HEK293 (cell line): ENCODE measurements at regions of chr3 and their contacts with region 1.

Region 1: DNA sequence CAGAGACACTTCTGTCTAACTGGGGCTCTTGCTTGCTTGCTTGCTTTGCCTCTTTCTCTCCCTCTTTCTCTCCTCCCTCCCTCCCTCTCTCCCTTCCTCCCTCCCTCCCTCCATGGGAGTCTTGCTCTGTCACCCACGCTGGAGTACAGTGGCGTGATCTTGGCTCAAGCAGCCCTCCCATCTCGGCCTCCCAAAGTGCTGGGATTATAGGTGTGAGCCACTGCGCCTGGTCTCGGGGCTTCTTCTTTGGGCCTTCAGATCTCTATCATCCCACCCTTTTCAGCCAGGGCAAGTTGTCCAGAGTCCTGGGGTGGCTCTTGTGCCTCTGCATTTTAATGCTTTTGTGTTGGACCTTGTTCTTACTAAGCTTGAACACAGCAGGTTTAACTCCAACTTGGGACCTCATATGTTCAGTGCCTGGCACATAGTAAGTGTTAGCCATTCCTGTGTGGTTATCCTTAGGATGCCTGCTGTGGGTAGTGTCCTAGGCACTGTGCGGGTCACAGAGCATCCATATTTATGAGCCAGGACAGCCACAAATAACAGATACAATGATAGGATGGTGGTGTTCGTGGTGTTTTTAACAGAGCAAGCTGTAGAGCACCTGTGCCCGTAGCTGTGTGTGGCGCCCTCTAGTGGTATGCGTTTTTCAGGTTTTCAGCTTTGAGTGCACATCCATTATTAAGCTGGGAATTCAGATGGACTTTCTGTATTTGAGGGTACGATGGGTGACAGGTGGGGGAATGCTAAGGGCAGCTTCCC is 75.1 kb downstream of the CCK start:
- H3K4me3 ChIP-seq: no peak overlapping the region
- H3K27ac ChIP-seq: no peak overlapping the region
- H3K4me1 ChIP-seq: no peaks in the 10 kb centered on the region
- CTCF ChIP-seq: peak; percentile 74

Region 2: GRCh38 chr3:41893977-41894376 is 296.9 kb before region 1 on chr3:
- CTCF ChIA-PET with region 1: interaction called, 20 read pairs
- POLR2A ChIA-PET with region 1: no interaction called
- H3K4me3 ChIP-seq: no peak overlapping the region
- H3K27ac ChIP-seq: no peak overlapping the region
- H3K4me1 ChIP-seq: no peaks in the 10 kb centered on the region
- CTCF ChIP-seq: no peak

Region 3: GRCh38 chr3:42052484-42053351 is 138.2 kb before region 1 on chr3:
- CTCF ChIA-PET with region 1: no interaction called
- POLR2A ChIA-PET with region 1: no interaction called
- H3K4me3 ChIP-seq: no peak overlapping the region
- H3K27ac ChIP-seq: no peak overlapping the region
- H3K4me1 ChIP-seq: no peaks in the 10 kb centered on the region
- CTCF ChIP-seq: no peak

Region 4: DNA sequence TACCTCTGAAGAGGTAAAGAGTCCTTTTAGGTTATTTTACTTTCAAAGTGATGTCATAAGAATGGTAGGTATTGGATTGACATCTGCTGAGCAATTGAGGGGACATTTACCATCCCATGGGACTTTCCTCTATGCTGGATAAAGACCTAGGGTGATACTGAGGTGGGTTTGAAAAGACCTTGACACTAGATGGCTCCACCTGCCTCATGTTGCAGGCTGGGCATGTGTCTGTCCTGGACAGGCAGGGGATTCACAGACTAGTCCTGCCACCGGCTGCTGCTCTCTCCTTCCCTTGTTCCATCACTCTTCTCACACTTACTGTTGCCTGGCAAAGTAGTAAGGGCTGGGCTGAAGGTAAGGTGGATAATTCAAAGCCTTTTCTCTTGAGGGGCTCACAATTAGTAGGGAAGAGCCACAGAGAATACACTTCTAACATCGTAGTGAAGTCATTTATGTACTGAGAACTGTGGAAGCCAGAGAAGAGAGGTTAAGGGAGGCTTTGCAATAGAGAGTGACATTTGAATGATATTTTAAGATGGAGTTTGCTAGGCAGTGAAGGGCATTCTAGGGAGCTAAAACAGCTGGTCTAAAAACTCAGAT is 72.0 kb before region 1 on chr3:
- CTCF ChIA-PET with region 1: interaction called, 83 read pairs
- POLR2A ChIA-PET with region 1: no interaction called
- H3K4me3 ChIP-seq: no peak overlapping the region
- H3K27ac ChIP-seq: no peak overlapping the region
- H3K4me1 ChIP-seq: no peaks in the 10 kb centered on the region
- CTCF ChIP-seq: peak; percentile 48; the same call in 1 of the 2 replicates

Region 5: GRCh38 chr3:42166662-42167300 is 24.1 kb before region 1 on chr3:
- CTCF ChIA-PET with region 1: interaction called, 14 read pairs
- POLR2A ChIA-PET with region 1: interaction called, 3 read pairs
- H3K4me3 ChIP-seq: no peak overlapping the region
- H3K27ac ChIP-seq: no peak overlapping the region
- H3K4me1 ChIP-seq: no peaks in the 10 kb centered on the region
- CTCF ChIP-seq: no peak

Region 6: GRCh38 chr3:42175386-42176240 is 15.3 kb before region 1 on chr3:
- CTCF ChIA-PET with region 1: interaction called, 28 read pairs
- POLR2A ChIA-PET with region 1: interaction called, 4 read pairs
- H3K4me3 ChIP-seq: no peak overlapping the region
- H3K27ac ChIP-seq: no peak overlapping the region
- H3K4me1 ChIP-seq: no peaks in the 10 kb centered on the region; the same call in 1 of the 2 replicates
- CTCF ChIP-seq: no peak